HCT116 (cell line): ENCODE measurements at regions of chr5 and their contacts with region 1.

Region 1: GRCh38 chr5:173764321-173765029 is 123.7 kb upstream of the CPEB4 start:
- DNase-seq: peak; percentile 94
- ATAC-seq: peak; percentile 95
- H3K4me3 ChIP-seq: peak overlapping the region in 1 of 2 experiments; percentile 4; a peak in 1 of 4 replicates
- H3K27ac ChIP-seq: no peak overlapping the region
- H3K4me1 ChIP-seq: peaks cover 24 to 40% of the 10 kb centered on the region in 2 experiments
- H3K27me3 ChIP-seq: peaks cover 66% of the 10 kb centered on the region; the same call in 1 of the 2 replicates
- CTCF ChIP-seq: no peak
- POLR2A ChIP-seq: no peak
- RAD21 ChIP-seq: peak; percentile 34

Region 2: DNA sequence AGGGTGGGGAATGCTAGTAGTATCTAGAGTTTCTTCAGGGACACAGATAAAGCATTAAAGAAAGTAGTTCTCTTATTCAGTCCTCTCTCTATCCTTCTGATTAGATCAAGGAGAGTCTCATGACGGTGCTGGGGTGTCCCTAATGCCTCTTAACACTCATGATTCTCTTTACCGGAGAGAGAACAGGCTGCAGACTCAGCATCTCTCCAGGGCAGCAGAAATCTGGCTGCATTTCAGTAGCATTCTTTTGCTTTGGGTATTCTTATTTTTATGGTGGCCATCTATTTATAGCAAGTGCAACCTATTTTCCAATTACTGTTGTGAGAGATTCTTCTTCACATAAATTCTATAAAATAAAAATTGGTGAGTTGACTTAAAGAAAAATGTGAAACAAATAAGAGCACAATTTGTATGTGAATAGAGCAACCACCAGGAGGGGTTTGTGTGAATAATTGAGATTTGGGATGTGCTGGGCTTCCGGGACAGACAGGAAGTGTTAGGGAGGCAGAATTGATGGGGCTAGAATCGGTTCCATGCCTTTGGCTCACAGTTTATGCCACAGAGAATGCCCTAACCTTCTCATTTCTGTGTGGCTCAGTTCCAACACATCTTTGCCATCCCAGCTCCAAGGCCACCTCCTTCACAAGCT is 124.2 kb before region 1 on chr5:
- CTCF ChIA-PET with region 1: no interaction called
- POLR2A ChIA-PET with region 1: no interaction called
- RAD21 ChIA-PET with region 1: no interaction called
- intact Hi-C with region 1: no loop called
- DNase-seq: no peak
- ATAC-seq: no peak
- H3K4me3 ChIP-seq: no peak overlapping the region
- H3K27ac ChIP-seq: no peak overlapping the region
- H3K4me1 ChIP-seq: no peaks in the 10 kb centered on the region
- H3K27me3 ChIP-seq: 0 out of 2 replicates have a peak, but pooled peaks cover 4% of the 10 kb centered on the region
- CTCF ChIP-seq: no peak
- POLR2A ChIP-seq: no peak
- RAD21 ChIP-seq: 0 out of 2 replicates have a peak, but pooled peaks have one; percentile 4

Region 3: GRCh38 chr5:173887610-173888472 is 123.4 kb after region 1 on chr5 and contains the start of gene CPEB4:
- CTCF ChIA-PET with region 1: interaction called, 3 read pairs
- POLR2A ChIA-PET with region 1: interaction called, 4 read pairs
- RAD21 ChIA-PET with region 1: no interaction called
- intact Hi-C with region 1: loop called (anchors 5 kb)
- DNase-seq: peak; percentile 98
- ATAC-seq: peak; percentile 98
- H3K4me3 ChIP-seq: peak within 1 kb of the TSS; percentile 58 to 71
- H3K27ac ChIP-seq: peak within 1 kb of the TSS; percentile 60
- H3K4me1 ChIP-seq: peaks cover 0 to 25% of the 10 kb centered on the region in 2 experiments; a peak in 2 of 4 replicates
- H3K27me3 ChIP-seq: peaks cover 11% of the 10 kb centered on the region; the same call in 1 of the 2 replicates
- CTCF ChIP-seq: no peak
- POLR2A ChIP-seq: no peak
- RAD21 ChIP-seq: no peak
- total RNA-seq, gene CPEB4: 11.1 TPM

Region 4: GRCh38 chr5:173941758-173942401 is 177.4 kb after region 1 on chr5:
- CTCF ChIA-PET with region 1: no interaction called
- POLR2A ChIA-PET with region 1: no interaction called
- RAD21 ChIA-PET with region 1: no interaction called
- intact Hi-C with region 1: no loop called
- DNase-seq: no peak
- ATAC-seq: no peak
- H3K4me3 ChIP-seq: no peak overlapping the region
- H3K27ac ChIP-seq: no peak overlapping the region
- H3K4me1 ChIP-seq: no peaks in the 10 kb centered on the region
- H3K27me3 ChIP-seq: no peaks in the 10 kb centered on the region
- CTCF ChIP-seq: no peak
- POLR2A ChIP-seq: no peak
- RAD21 ChIP-seq: no peak

Region 5: GRCh38 chr5:174724491-174725260 is 960.2 kb after region 1 on chr5 and contains the start of gene MSX2:
- CTCF ChIA-PET with region 1: no interaction called
- POLR2A ChIA-PET with region 1: no interaction called
- RAD21 ChIA-PET with region 1: no interaction called
- intact Hi-C with region 1: loop called (anchors 10 kb)
- DNase-seq: peak; percentile 80
- ATAC-seq: peak; percentile 92
- H3K4me3 ChIP-seq: peak within 1 kb of the TSS; percentile 77 to 83
- H3K27ac ChIP-seq: peak within 1 kb of the TSS; percentile 75
- H3K4me1 ChIP-seq: peaks cover 7 to 35% of the 10 kb centered on the region in 2 experiments; a peak in 3 of 4 replicates
- H3K27me3 ChIP-seq: peaks cover 19% of the 10 kb centered on the region; the same call in 1 of the 2 replicates
- CTCF ChIP-seq: no peak
- POLR2A ChIP-seq: no peak
- RAD21 ChIP-seq: no peak
- total RNA-seq, gene MSX2: 11.3 TPM